A673 (cell line): ENCODE measurements at regions of chr3 and their contacts with region 1.

Region 1: DNA sequence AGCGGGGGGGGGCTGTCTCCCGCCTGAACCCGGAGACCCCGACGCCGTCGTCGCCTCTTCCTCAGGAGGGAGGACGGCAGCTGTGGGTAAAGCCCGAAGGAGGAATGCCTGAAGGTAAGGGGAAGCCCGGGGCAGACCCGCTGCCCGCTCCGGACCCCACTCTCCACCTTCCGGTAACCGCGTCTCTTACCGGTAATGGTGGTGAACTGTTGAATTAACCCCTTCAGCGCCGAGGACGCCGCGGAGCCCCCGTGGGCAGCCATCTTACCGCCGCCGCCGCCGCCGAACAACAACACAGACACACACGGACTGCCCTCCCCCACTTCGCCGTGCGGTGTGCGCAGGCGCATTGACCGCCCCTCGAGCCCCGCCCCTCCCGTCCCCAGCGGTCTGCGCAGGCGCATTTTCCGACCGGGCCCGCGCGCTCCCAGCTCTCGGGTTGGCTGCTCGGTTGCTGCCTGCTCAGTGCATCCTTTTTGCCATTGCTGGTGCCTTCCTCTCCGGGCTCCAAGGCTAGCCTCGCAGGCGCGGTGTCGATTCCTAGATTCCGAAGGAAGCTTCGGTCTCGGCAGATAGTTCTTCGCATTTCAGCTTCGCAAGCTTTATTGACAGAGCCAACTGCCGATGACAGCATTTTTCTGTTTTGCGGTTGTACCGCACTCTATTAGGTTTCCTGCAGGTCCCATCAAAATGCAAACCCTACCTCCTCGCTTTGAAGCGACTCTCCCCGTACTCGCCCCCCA is at the start of gene UBXN7:
- DNase-seq: peak; percentile 95
- H3K4me3 ChIP-seq: peak within 1 kb of the TSS; percentile 87
- H3K27ac ChIP-seq: peak within 1 kb of the TSS; percentile 84
- H3K4me1 ChIP-seq: peaks cover 6% of the 10 kb centered on the region
- H3K27me3 ChIP-seq: no peaks in the 10 kb centered on the region
- CTCF ChIP-seq: no peak
- total RNA-seq, gene UBXN7: 92.8 and 94.2 TPM in 2 replicates

Region 2: GRCh38 chr3:196317687-196318467 is 114.4 kb before region 1 on chr3 and contains the start of gene DYNLT2B:
- CTCF ChIA-PET with region 1: no interaction called
- POLR2A ChIA-PET with region 1: interaction called, 9 read pairs
- intact Hi-C with region 1: loop called (anchors 5 kb)
- DNase-seq: peak; percentile 94
- H3K4me3 ChIP-seq: peak within 1 kb of the TSS; percentile 99
- H3K27ac ChIP-seq: peak within 1 kb of the TSS; percentile 91
- H3K4me1 ChIP-seq: no peaks in the 10 kb centered on the region
- H3K27me3 ChIP-seq: no peaks in the 10 kb centered on the region
- CTCF ChIP-seq: no peak
- total RNA-seq, gene DYNLT2B: 23.3 and 24.6 TPM in 2 replicates

Region 3: GRCh38 chr3:196406811-196407470 is 25.4 kb before region 1 on chr3:
- CTCF ChIA-PET with region 1: no interaction called
- POLR2A ChIA-PET with region 1: interaction called, 10 read pairs
- intact Hi-C with region 1: no loop called
- DNase-seq: peak; percentile 63
- H3K4me3 ChIP-seq: no peak overlapping the region
- H3K27ac ChIP-seq: no peak overlapping the region
- H3K4me1 ChIP-seq: peaks cover 7% of the 10 kb centered on the region
- H3K27me3 ChIP-seq: no peaks in the 10 kb centered on the region
- CTCF ChIP-seq: no peak